Heart right ventricle (tissue), 16 donors: ENCODE measurements at regions of chrX and their contacts with region 1.

Region 1: DNA sequence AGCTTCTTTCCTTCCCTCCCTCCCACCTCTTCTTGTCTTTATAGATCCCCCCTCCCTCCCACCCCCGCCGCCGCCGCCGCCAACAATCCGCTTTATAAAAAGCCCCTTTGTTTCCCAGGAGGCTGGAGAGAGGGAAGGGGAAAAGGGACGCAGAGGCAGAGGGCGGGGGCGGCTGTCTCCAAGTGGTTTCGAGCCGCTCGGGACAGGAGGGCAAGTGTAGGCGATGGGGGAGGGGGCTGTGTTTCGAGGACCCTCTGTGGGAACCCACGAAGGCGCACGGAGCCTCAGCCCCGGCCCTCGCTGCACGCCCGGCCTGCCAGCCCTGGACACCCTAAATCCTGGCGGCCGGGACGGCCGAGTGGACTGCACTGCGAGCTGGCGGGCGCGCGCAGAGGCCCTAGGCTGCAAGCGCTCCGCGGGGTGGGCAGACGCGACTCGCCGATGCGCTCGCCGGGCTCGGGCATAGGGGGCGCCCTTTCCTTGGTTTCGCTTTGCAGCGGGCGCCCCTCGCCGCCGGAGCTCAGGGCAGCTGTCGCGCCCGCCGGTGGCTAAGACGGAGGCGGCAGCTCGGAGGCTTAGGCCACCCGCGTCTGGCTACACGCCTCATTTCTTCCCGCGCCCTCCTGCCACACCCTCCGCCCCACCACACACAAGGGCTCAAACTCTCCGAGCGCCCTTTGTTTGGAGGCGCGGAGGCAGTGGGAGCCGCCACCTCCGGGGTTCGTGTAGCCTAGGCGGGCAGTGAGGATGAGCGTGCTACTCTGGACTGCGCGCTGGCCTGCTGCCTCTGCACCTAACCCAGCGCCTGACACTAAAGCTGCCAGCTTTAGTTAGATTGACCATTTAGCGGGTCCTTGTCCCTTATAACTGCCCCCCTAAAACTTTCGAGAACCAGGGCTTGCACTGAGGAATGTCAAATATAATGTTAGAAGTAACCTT is 2.2 kb downstream of the MAMLD1 start:
- DNase-seq: peak; percentile 68 to 78
- ATAC-seq: peak; percentile 62 to 78 (median 70)
- H3K4me3 ChIP-seq: peak overlapping the region; percentile 52 to 73 (median 62)
- H3K27ac ChIP-seq: peak overlapping the region; percentile 34 to 88 (median 82)
- H3K4me1 ChIP-seq: peaks cover 0 to 22% (median 10%) of the 10 kb centered on the region in 9 donors
- H3K27me3 ChIP-seq: peaks cover 0 to 57% (median 0%) of the 10 kb centered on the region in 7 donors
- CTCF ChIP-seq: peak in 8 of 9 donors; percentile 31 to 74 (median 66)

Region 2: DNA sequence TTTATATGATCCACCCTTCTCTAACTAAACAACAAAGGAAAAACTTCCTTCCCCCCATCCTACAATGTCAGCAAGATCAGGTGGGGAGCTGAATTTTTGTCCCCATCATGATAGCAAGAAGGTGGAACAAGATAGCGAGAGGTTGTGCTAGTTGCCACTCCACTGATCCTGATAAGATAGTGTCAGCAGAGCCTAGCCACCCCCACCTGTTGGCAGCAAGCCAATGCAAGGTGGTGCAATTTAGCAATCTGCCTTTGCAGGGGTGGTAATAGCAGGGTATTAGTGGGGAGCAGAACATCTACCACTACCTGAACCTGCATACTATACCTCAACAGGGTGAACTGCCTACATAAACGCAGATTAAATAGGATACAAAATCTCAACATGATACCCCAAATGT is 82.4 kb before region 1 on chrX:
- intact Hi-C with region 1: no loop called
- DNase-seq: no peak
- ATAC-seq: no peak
- H3K4me3 ChIP-seq: no peak overlapping the region
- H3K27ac ChIP-seq: no peak overlapping the region
- H3K4me1 ChIP-seq: no peaks in the 10 kb centered on the region
- H3K27me3 ChIP-seq: peaks cover 0 to 17% (median 0%) of the 10 kb centered on the region in 7 donors
- CTCF ChIP-seq: no peak

Region 3: DNA sequence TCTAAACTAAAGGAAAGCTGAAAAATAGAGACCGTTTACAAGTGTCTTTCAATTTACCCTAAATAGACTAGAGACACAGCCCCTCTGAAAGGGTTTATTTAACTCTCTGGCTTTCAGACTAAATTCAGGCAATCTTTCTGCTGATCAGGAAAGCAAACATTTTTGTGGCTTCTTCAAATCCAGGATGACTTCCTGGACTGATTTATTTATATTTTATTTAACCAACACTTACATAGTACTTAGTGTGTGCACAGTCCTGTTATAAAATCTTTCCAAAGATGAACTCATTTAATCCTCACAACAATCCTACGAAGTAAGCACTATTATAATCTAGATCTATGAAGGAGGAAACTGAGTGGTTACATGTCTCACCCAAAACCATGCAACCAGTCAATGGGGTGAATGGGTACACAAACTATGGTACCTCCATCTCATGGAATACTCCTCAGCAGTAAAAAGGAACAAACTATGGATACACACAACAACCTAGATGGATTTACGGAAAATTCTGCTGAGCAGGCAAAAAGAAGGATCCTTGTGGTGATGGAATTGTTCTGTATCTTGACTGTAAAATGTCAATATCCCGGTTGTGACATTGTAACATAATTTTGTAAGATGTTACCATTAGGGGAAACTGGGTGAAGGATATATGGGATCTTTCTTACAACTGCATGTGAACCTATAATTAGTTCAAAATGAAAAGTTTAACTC is 66.3 kb before region 1 on chrX:
- intact Hi-C with region 1: no loop called
- DNase-seq: no peak
- ATAC-seq: no peak
- H3K4me3 ChIP-seq: no peak overlapping the region
- H3K27ac ChIP-seq: no peak overlapping the region
- H3K4me1 ChIP-seq: no peaks in the 10 kb centered on the region
- H3K27me3 ChIP-seq: peaks cover 0 to 20% (median 0%) of the 10 kb centered on the region in 7 donors
- CTCF ChIP-seq: no peak

Region 4: DNA sequence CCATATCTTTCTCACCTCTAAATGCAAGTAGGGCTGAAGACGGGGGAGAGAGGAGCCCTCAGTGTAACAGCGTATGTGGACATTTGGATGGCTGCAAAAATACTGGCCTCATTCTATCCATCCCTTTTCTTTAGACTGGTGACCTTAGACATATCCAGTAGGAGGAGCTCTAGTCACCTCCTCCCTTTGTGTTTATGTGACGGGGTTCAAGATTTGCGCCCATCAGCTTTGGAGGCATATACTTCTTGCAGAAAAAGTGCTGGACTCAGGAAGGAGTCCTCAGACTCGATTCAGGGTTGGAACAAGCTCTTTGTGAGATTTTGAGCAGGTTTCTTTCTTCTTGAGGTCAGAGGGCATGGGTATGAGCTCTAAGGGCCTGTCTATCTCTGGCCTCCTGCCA is 84.0 kb after region 1 on chrX:
- intact Hi-C with region 1: loop called in 1 of 10 experiments (anchors 5 kb)
- DNase-seq: no peak
- ATAC-seq: no peak
- H3K4me3 ChIP-seq: no peak overlapping the region
- H3K27ac ChIP-seq: no peak overlapping the region
- H3K4me1 ChIP-seq: peaks cover 0 to 38% (median 6%) of the 10 kb centered on the region in 9 donors
- H3K27me3 ChIP-seq: no peaks in the 10 kb centered on the region
- CTCF ChIP-seq: no peak

Region 5: GRCh38 chrX:150486011-150486410 is 120.7 kb after region 1 on chrX:
- intact Hi-C with region 1: loop called in 7 of 10 experiments (anchors 2 to 10 kb)
- DNase-seq: peak; percentile 25 to 37
- ATAC-seq: peak in 7 of 8 donors; percentile 37 to 73 (median 63)
- H3K4me3 ChIP-seq: no peak overlapping the region
- H3K27ac ChIP-seq: no peak overlapping the region
- H3K4me1 ChIP-seq: no peaks in the 10 kb centered on the region
- H3K27me3 ChIP-seq: peaks cover 0 to 3% (median 0%) of the 10 kb centered on the region in 7 donors
- CTCF ChIP-seq: peak; percentile 25 to 68 (median 62)

Region 6: GRCh38 chrX:150575416-150575808 is 210.1 kb after region 1 on chrX:
- intact Hi-C with region 1: loop called in 1 of 10 experiments (anchors 10 kb)
- DNase-seq: no peak
- ATAC-seq: no peak
- H3K4me3 ChIP-seq: peak overlapping the region in 1 of 10 donors; percentile 22
- H3K27ac ChIP-seq: peak overlapping the region in 1 of 10 donors; percentile 63
- H3K4me1 ChIP-seq: peaks cover 0 to 56% (median 15%) of the 10 kb centered on the region in 9 donors
- H3K27me3 ChIP-seq: no peaks in the 10 kb centered on the region
- CTCF ChIP-seq: no peak

Region 7: GRCh38 chrX:150587585-150588503 is 222.5 kb after region 1 on chrX:
- intact Hi-C with region 1: loop called in 1 of 10 experiments (anchors 5 kb)
- DNase-seq: no peak
- ATAC-seq: no peak
- H3K4me3 ChIP-seq: no peak overlapping the region
- H3K27ac ChIP-seq: no peak overlapping the region
- H3K4me1 ChIP-seq: no peaks in the 10 kb centered on the region
- H3K27me3 ChIP-seq: peaks cover 0 to 4% (median 0%) of the 10 kb centered on the region in 7 donors
- CTCF ChIP-seq: peak; percentile 40 to 70 (median 60)